BJ (cell line): ENCODE measurements at regions of chr2 and their contacts with region 1.

Region 1: DNA sequence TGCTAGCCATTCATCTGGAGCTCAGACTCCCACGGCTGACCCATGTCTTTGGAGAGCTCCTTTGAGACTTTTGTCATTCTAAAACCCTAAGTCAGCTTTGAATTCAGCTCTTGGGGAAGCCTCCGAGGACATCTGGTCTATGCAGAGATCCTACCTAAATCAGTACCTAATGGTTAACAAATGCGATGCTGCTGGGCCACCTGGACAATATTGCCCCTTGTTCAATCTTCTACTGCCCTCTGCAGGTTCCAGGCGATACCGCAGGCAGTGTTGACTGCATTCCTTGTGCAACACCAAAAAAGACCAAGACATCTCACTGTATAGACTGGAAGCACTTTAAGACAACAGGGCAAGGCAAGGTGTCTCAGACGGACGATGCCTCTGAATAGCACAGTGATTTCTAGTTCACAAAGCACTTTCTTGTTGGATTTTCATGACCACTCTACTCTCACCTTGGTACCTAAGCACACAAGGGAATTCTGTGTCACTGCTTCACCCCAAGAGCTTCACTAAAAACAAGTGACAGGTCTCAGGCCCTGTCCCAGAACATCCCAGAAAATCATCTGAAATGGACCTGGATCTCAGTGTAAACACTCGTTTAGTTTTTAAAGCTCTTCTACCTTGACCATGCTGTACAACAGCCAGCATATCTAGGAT is 80.9 kb downstream of the XDH start:
- DNase-seq: peak; percentile 24
- H3K4me3 ChIP-seq: no peak overlapping the region
- H3K27me3 ChIP-seq: no peaks in the 10 kb centered on the region
- CTCF ChIP-seq: peak; percentile 96

Region 2: GRCh38 chr2:30862054-30862651 is 471.5 kb before region 1 on chr2:
- CTCF ChIA-PET with region 1: interaction called, 19 read pairs
- POLR2A ChIA-PET with region 1: no interaction called
- DNase-seq: peak; percentile 6
- H3K4me3 ChIP-seq: no peak overlapping the region
- H3K27me3 ChIP-seq: no peaks in the 10 kb centered on the region
- CTCF ChIP-seq: peak; percentile 78

Region 3: DNA sequence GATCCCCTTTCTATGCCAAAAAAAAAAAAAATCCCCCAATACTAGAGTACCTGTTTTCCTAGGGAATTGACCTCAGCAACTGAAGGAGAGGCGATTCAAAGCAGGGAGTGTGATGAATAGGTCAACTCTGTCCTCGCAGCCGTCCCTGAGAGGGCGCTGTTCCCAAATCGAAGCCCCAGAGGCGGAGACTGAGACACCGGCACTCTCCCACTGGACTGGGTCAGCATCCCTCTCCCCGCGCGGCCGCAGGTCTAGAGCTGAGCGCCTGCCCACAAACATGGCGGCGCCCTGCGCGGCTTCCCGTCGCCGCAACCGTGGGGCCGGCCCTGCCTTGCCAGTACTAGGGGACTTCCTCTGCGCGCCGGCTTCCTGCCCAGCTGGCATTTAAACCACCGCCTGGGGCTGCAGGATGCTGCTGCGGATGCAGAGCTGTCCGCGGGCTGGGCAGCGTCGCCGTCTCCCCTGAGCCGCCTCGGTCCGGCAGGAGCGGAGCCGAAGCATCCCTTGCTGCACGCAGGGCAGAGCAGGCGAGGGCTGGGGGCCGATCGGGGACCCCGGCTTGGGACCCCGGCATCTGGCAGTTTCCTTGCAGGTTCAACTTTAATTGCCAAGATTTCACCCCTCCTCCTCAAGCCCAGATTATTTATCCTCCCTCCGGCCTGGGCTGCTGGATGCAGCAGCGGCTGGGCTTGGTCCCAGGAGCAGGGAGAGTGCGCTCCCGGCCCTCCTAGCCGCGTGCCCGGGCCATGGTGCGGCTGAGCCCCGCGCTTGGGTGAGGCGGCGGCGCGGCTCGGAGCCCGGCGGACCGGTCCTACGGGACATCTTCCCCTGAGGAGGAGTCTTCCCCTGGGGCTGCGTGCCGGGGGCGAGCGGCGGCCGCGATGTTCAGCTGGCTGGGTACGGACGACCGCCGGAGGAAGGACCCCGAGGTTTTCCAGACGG is 99.6 kb before region 1 on chr2 and contains the start of gene EHD3:
- CTCF ChIA-PET with region 1: interaction called, 104 read pairs
- POLR2A ChIA-PET with region 1: no interaction called
- DNase-seq: peak; percentile 59
- H3K4me3 ChIP-seq: peak within 1 kb of the TSS; percentile 77
- H3K27me3 ChIP-seq: no peaks in the 10 kb centered on the region
- CTCF ChIP-seq: peak; percentile 87
- polyA plus RNA-seq, gene EHD3: 46.5 and 69.4 TPM in 2 replicates

Region 4: DNA sequence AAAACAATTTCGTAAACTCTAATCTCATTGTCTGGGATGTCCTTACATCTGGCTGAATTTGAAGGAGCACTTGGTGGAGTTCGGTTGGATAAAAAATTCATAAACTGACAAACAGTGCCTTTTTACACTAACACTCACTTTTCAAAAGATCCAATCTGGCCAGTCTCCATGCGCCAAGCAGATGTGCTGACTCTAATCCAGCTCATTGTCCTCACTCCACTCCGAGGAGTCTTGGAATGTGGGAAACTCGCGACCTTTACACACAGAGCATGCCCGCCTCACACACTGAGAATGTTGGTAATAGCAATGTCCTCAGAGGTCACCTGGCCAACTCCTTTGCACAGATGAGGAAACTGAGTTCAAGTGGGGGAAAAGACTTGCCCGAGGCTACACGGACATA is 14.1 kb after region 1 on chr2:
- CTCF ChIA-PET with region 1: interaction called, 10 read pairs
- POLR2A ChIA-PET with region 1: interaction called, 3 read pairs
- DNase-seq: peak; percentile 85
- H3K4me3 ChIP-seq: no peak overlapping the region
- H3K27me3 ChIP-seq: no peaks in the 10 kb centered on the region
- CTCF ChIP-seq: no peak

Region 5: GRCh38 chr2:31523871-31524492 is 190.3 kb after region 1 on chr2:
- CTCF ChIA-PET with region 1: interaction called, 24 read pairs
- POLR2A ChIA-PET with region 1: no interaction called
- DNase-seq: no peak
- H3K4me3 ChIP-seq: no peak overlapping the region
- H3K27me3 ChIP-seq: no peaks in the 10 kb centered on the region
- CTCF ChIP-seq: peak; percentile 71

Region 6: GRCh38 chr2:31534636-31535035 is 201.0 kb after region 1 on chr2:
- CTCF ChIA-PET with region 1: no interaction called
- POLR2A ChIA-PET with region 1: no interaction called
- DNase-seq: no peak
- H3K4me3 ChIP-seq: no peak overlapping the region
- H3K27me3 ChIP-seq: 0 out of 2 replicates have a peak, but pooled peaks cover 3% of the 10 kb centered on the region
- CTCF ChIP-seq: no peak

Region 7: GRCh38 chr2:31805688-31806087 is 472.0 kb after region 1 on chr2:
- CTCF ChIA-PET with region 1: no interaction called
- POLR2A ChIA-PET with region 1: no interaction called
- DNase-seq: no peak
- H3K4me3 ChIP-seq: no peak overlapping the region
- H3K27me3 ChIP-seq: no peaks in the 10 kb centered on the region
- CTCF ChIP-seq: no peak